ENCODE measurements at regions of chr10 and their contacts with region 1.

Region 1: GRCh38 chr10:133388973-133389818 is 4.8 kb upstream of the MTG1 start:
- DNase-seq: peak in 2 of 3 donors; percentile 56 to 70
- H3K4me3 ChIP-seq: peak overlapping the region in 3 of 7 experiments; percentile 12 to 27 (median 20)
- H3K27ac ChIP-seq: peak overlapping the region in 1 of 2 experiments; percentile 64
- H3K4me1 ChIP-seq: peaks cover 2 to 24% (median 23%) of the 10 kb centered on the region in 4 experiments
- H3K27me3 ChIP-seq: no peaks in the 10 kb centered on the region

Region 2: GRCh38 chr10:133364645-133365431 is 24.4 kb before region 1 on chr10:
- CTCF ChIA-PET with region 1: no interaction called
- POLR2A ChIA-PET with region 1: no interaction called
- DNase-seq: no peak
- H3K4me3 ChIP-seq: no peak overlapping the region
- H3K27ac ChIP-seq: no peak overlapping the region
- H3K4me1 ChIP-seq: no peaks in the 10 kb centered on the region
- H3K27me3 ChIP-seq: no peaks in the 10 kb centered on the region

Region 3: DNA sequence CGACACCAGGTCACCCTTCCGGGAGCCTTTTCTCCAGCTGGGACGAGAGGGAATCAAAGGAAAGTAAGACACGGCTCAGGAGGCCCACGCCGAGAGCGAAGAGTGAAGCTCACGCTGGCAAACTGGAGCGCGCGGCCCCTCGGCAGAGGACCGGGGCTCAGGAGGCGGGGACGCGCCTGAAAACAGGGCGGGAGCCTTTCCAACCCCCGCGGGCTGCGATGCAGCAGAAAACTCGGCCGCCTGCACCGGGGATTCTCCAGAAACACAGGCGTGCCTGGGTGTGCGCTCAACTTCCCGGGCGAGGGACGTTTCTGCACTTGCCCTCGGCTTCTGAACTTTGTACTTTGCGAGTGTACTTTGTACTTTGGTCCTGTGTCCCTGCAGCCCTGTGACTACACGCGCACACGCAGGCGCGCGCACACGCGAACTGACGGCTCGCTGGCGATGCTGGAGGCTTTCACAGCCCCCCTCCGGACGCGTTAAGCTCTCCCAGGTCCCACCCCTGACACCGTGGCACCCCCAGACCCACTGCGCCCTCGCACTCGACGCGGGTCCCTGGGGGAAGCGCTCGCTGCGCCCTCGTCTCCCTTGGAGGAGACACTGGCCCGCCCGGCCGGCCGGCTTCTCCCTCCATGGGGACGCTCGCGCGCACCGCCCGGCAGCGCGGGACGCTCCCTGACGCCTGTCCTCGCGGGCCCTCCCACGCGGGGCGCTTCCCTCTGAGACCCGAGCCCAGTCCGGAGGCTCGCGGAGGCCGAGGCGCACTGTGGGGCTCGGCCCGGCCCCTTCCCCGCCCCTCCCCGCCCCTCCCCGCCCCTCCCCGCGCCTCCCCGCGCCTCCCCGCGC is 10.7 kb before region 1 on chr10:
- CTCF ChIA-PET with region 1: interaction called, 16 read pairs
- POLR2A ChIA-PET with region 1: interaction called, 9 read pairs
- DNase-seq: peak in 2 of 3 donors; percentile 54 to 70
- H3K4me3 ChIP-seq: peak overlapping the region; percentile 43 to 81 (median 72)
- H3K27ac ChIP-seq: no peak overlapping the region
- H3K4me1 ChIP-seq: peaks cover 0 to 47% (median 35%) of the 10 kb centered on the region in 4 experiments
- H3K27me3 ChIP-seq: peaks cover 0 to 3% (median 0%) of the 10 kb centered on the region in 5 experiments

Region 4: DNA sequence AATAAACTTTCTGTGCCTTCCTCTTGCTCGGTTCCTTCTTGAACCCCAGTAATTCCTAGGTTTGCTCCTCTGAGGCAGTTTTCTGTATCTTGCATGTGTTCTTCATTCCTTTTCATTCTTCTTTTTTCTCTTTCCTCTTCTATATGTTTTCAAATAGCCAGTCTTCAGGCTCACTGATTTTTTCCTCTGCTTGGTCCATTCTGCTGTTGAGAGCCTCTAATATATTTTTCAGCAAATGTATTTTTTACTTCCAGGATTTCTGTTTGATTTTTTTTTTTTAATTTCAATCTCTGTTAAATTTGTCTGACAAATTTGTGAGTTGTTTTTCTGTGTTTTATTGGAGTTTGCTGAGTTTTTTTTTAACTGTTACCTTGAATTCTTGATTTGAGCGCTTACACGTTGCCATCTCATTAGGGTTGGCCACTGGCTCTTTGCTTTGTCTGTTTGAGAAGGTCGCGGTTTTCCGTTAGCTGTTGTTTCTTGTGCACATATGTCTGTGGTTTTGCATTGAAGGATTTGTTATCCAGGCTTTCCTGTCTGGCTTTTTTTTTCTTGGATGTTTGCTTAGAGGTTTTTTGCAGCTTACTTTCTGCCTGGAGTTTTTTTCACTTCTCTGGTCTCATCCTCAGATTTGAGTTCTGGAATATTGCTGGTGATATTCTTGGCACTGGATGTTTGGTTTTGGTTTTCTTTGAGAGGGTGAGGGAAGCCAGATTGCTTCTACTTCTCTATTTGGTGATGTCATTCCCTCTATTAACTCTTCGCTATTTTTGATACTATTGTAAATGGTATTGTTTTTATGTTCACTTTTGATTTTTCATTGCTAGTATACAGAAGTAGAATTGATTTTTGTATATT is 22.6 kb after region 1 on chr10:
- CTCF ChIA-PET with region 1: no interaction called
- POLR2A ChIA-PET with region 1: no interaction called
- DNase-seq: peak in 1 of 3 donors; percentile 19
- H3K4me3 ChIP-seq: no peak overlapping the region
- H3K27ac ChIP-seq: no peak overlapping the region
- H3K4me1 ChIP-seq: no peaks in the 10 kb centered on the region
- H3K27me3 ChIP-seq: no peaks in the 10 kb centered on the region